SK-N-SH (cell line): ENCODE measurements at regions of chr2 and their contacts with region 1.

Region 1: GRCh38 chr2:21317131-21317530 is 193.4 kb downstream of the TDRD15 start:
- DNase-seq: peak; percentile 55
- H3K4me3 ChIP-seq: no peak overlapping the region; a peak in 1 of 4 replicates
- H3K27ac ChIP-seq: peak overlapping the region in 1 of 2 experiments; percentile 62; a peak in 2 of 4 replicates
- H3K4me1 ChIP-seq: peaks cover 0 to 6% of the 10 kb centered on the region in 2 experiments; a peak in 2 of 4 replicates
- H3K27me3 ChIP-seq: no peaks in the 10 kb centered on the region
- CTCF ChIP-seq: peak; percentile 57
- EP300 ChIP-seq: no peak
- RAD21 ChIP-seq: peak; percentile 88

Region 2: DNA sequence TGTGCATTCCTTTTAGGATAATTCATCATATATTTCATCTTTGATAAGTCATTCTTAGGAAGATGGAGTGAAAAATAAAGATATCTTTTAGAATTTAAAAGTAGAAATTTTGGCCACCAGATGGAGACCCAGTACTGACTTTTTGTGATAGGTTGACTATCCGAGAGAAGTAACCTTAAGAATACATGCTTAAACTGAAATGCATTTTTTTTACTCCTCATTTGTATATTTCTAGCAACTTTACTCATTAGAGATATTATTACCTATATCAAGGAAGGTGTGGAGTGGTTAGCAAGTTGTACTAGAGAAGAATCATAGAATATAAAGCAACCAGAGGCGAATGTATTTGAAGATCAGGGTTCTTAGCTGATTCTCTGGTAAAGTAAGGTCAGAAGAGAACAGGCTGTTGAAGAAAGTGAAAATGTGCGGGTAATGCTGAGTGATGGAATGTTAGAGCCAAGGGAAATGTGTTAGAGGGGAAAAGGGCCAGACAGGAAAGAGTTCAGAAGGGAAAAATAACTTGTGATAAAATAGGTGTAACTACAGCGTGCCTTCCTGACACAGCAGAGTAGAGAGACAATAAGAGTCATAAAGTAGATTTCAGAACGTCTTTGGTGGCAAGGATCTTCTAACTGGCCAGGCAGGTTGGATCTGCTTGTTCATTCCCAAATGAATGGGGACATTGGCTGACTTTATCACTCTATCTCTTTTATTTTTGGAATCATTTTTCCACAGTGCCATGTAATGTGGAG is 141.1 kb before region 1 on chr2:
- CTCF ChIA-PET with region 1: interaction called, 95 read pairs
- POLR2A ChIA-PET with region 1: no interaction called
- DNase-seq: peak; percentile 40
- H3K4me3 ChIP-seq: no peak overlapping the region; a peak in 1 of 4 replicates
- H3K27ac ChIP-seq: peak overlapping the region in 1 of 2 experiments; percentile 13; a peak in 2 of 4 replicates
- H3K4me1 ChIP-seq: peaks cover 0 to 2% of the 10 kb centered on the region in 2 experiments; a peak in 2 of 4 replicates
- H3K27me3 ChIP-seq: no peaks in the 10 kb centered on the region
- CTCF ChIP-seq: peak; percentile 40
- EP300 ChIP-seq: no peak
- RAD21 ChIP-seq: peak; percentile 85

Region 3: GRCh38 chr2:21233194-21233593 is 83.9 kb before region 1 on chr2:
- CTCF ChIA-PET with region 1: interaction called, 11 read pairs
- POLR2A ChIA-PET with region 1: no interaction called
- DNase-seq: no peak
- H3K4me3 ChIP-seq: no peak overlapping the region
- H3K27ac ChIP-seq: no peak overlapping the region
- H3K4me1 ChIP-seq: peaks cover 0 to 10% of the 10 kb centered on the region in 2 experiments; a peak in 1 of 4 replicates
- H3K27me3 ChIP-seq: no peaks in the 10 kb centered on the region
- CTCF ChIP-seq: no peak
- EP300 ChIP-seq: no peak
- RAD21 ChIP-seq: no peak

Region 4: GRCh38 chr2:21281791-21282514 is 35.2 kb before region 1 on chr2:
- CTCF ChIA-PET with region 1: interaction called, 29 read pairs
- POLR2A ChIA-PET with region 1: interaction called, 4 read pairs
- DNase-seq: peak; percentile 92
- H3K4me3 ChIP-seq: no peak overlapping the region
- H3K27ac ChIP-seq: peak overlapping the region; percentile 12 to 99; a peak in 2 of 4 replicates
- H3K4me1 ChIP-seq: peaks cover 0 to 67% of the 10 kb centered on the region in 2 experiments; a peak in 2 of 4 replicates
- H3K27me3 ChIP-seq: no peaks in the 10 kb centered on the region
- CTCF ChIP-seq: no peak
- EP300 ChIP-seq: no peak; a peak in 2 of 4 replicates
- RAD21 ChIP-seq: peak; percentile 52

Region 5: DNA sequence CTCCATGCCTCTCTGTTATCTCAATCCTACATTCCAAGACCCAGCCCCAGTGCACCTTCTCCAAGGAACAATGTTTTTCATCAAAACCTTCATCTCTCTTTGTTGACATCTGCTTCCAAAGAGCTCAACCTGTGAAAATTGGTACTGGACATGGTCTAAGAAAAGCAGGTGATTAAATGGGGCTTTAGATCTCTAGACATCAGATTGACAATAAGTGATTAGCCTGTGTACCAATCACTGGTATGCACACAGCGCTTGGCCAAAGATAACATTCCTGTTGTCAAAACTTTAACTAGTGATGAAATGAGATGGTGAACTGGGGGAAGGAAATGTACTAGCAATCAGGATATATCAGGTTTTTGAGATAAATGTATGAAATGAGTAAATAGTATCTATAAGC is 10.1 kb before region 1 on chr2:
- CTCF ChIA-PET with region 1: interaction called, 22 read pairs
- POLR2A ChIA-PET with region 1: no interaction called
- DNase-seq: no peak
- H3K4me3 ChIP-seq: no peak overlapping the region
- H3K27ac ChIP-seq: peak overlapping the region in 1 of 2 experiments; percentile 86; a peak in 2 of 4 replicates
- H3K4me1 ChIP-seq: peaks cover 0 to 19% of the 10 kb centered on the region in 2 experiments; a peak in 2 of 4 replicates
- H3K27me3 ChIP-seq: no peaks in the 10 kb centered on the region
- CTCF ChIP-seq: no peak
- EP300 ChIP-seq: no peak
- RAD21 ChIP-seq: no peak